ENCODE measurements at regions of chr15 and their contacts with region 1.

Region 1: DNA sequence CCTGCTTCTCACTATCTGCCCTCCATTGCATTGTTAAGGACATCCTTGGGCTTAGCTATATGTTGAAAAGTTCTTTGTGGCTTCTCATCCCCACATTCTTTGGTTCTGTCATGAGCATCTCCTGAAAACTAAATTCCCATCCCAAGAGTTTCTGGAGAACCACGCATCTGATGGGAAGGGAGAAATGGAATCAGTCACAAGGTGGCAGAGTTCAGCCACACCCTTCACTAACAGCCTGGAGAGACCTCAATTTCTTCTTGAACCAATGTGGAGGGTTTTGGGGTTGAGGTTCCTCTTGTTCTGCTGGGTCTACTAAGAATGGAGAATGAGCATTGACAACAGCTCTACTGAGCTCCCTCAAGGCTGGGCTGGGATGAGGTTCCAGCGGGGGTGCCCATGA is 15.6 kb upstream of the MAGEL2 start:
- DNase-seq: no peak
- H3K4me3 ChIP-seq: no peak overlapping the region
- H3K27ac ChIP-seq: no peak overlapping the region
- H3K4me1 ChIP-seq: no peaks in the 10 kb centered on the region
- H3K27me3 ChIP-seq: no peaks in the 10 kb centered on the region
- CTCF ChIP-seq: no peak
- EP300 ChIP-seq: no peak
- POLR2A ChIP-seq: no peak

Region 2: DNA sequence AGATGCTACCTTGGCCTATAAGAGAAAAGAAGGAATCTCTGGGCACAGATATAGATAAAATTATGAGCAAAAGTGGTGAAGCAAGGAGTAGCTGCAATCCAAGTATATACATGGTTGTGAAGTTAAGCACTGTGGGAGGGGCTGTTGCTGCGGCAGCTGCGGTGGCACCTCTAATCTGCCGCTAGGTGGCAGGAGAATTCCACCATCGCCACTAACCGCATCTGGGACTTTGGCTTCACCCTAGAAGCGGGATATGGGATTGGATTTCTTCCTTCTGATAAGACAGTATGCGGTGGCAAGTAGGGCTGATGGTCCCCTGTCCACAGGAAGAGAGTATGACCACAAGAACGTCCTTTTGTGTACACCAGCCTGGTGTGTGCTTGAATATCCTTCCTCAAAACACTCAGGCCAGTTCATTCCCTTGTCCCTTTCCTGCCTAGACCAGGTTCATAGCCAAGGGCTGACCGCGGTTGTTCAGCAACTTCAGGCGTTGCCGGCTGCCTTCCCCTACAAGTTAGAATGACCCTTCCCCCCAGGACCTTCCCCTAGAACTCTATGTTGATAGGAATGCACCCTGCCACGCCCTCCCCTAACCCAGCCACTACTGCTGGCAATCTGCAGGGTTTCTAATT is 20.7 kb before region 1 on chr15:
- intact Hi-C with region 1: loop called in 1 of 4 experiments (anchors 1 kb)
- DNase-seq: peak; percentile 46 to 77 (median 61)
- H3K4me3 ChIP-seq: no peak overlapping the region
- H3K27ac ChIP-seq: no peak overlapping the region
- H3K4me1 ChIP-seq: no peaks in the 10 kb centered on the region
- H3K27me3 ChIP-seq: no peaks in the 10 kb centered on the region
- CTCF ChIP-seq: peak; percentile 62 to 68 (median 67)
- EP300 ChIP-seq: no peak
- POLR2A ChIP-seq: no peak

Region 3: GRCh38 chr15:23708332-23708731 is 45.1 kb after region 1 on chr15:
- intact Hi-C with region 1: loop called in 1 of 4 experiments (anchors 5 kb)
- DNase-seq: no peak
- H3K4me3 ChIP-seq: no peak overlapping the region
- H3K27ac ChIP-seq: no peak overlapping the region
- H3K4me1 ChIP-seq: no peaks in the 10 kb centered on the region
- H3K27me3 ChIP-seq: no peaks in the 10 kb centered on the region
- CTCF ChIP-seq: no peak
- EP300 ChIP-seq: no peak
- POLR2A ChIP-seq: no peak

Region 4: DNA sequence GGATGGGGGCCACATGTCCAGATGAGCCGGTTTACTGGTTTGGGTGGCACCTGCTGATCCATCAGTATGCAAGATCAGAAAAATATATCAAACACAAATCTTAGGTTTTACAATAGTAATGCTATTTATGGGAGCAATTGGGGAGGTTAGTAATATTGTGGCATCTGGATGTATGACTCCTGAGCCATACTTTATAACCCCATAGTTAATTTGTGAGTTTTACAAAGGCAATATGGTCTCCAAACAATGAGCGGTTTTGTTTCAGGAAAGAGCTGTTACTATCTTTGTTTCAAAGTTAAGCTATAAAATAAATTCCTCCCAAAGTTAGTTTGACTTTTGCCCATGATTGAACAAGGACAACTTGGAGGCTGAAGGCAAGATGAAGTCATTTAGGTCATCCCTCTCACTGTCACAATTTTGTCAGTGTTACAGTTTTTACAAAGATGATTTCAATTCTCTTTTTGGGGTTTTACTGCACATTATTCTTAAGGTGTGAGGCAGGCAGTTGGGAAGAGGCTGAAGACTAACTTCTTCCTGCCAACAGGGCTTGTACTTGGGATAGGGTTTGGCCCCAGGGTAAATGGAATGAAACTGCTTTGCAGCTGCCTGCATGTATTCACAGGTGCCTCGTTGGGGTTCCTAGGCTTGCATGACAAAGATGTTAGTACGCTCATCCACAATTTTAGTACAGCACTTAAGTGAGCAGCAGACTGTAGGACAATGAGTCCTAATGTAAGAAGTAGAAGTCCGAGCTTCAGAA is 320.5 kb after region 1 on chr15:
- intact Hi-C with region 1: no loop called
- DNase-seq: no peak
- H3K4me3 ChIP-seq: no peak overlapping the region
- H3K27ac ChIP-seq: no peak overlapping the region
- H3K4me1 ChIP-seq: no peaks in the 10 kb centered on the region
- H3K27me3 ChIP-seq: no peaks in the 10 kb centered on the region
- CTCF ChIP-seq: no peak
- EP300 ChIP-seq: no peak
- POLR2A ChIP-seq: no peak

Measured in ovary (tissue), 10 donors.